Heart left ventricle (tissue), 16 donors: ENCODE measurements at regions of chr2 and their contacts with region 1.

Region 1: GRCh38 chr2:124804014-124804940 is 779.2 kb downstream of the CNTNAP5 start:
- DNase-seq: no peak
- ATAC-seq: no peak
- H3K4me3 ChIP-seq: no peak overlapping the region
- H3K27ac ChIP-seq: no peak overlapping the region
- H3K4me1 ChIP-seq: no peaks in the 10 kb centered on the region
- H3K27me3 ChIP-seq: no peaks in the 10 kb centered on the region
- CTCF ChIP-seq: peak; percentile 34 to 59 (median 51)
- POLR2A ChIP-seq: no peak

Region 2: GRCh38 chr2:124027182-124027581 is 777.1 kb before region 1 on chr2:
- intact Hi-C with region 1: loop called in 2 of 10 experiments (anchors 5 to 10 kb)
- DNase-seq: no peak
- ATAC-seq: peak in 3 of 4 donors; percentile 55 to 70 (median 63)
- H3K4me3 ChIP-seq: no peak overlapping the region
- H3K27ac ChIP-seq: no peak overlapping the region
- H3K4me1 ChIP-seq: peaks cover 0 to 9% (median 0%) of the 10 kb centered on the region in 12 donors
- H3K27me3 ChIP-seq: peaks cover 4 to 46% (median 29%) of the 10 kb centered on the region in 9 donors
- CTCF ChIP-seq: peak; percentile 39 to 68 (median 62)
- POLR2A ChIP-seq: no peak

Region 3: GRCh38 chr2:124039846-124040245 is 764.4 kb before region 1 on chr2:
- intact Hi-C with region 1: loop called in 1 of 10 experiments (anchors 10 kb)
- DNase-seq: no peak
- ATAC-seq: no peak
- H3K4me3 ChIP-seq: no peak overlapping the region
- H3K27ac ChIP-seq: no peak overlapping the region
- H3K4me1 ChIP-seq: no peaks in the 10 kb centered on the region
- H3K27me3 ChIP-seq: no peaks in the 10 kb centered on the region
- CTCF ChIP-seq: no peak
- POLR2A ChIP-seq: no peak

Region 4: GRCh38 chr2:125037135-125037653 is 232.9 kb after region 1 on chr2:
- intact Hi-C with region 1: no loop called
- DNase-seq: no peak
- ATAC-seq: no peak
- H3K4me3 ChIP-seq: no peak overlapping the region
- H3K27ac ChIP-seq: no peak overlapping the region
- H3K4me1 ChIP-seq: no peaks in the 10 kb centered on the region
- H3K27me3 ChIP-seq: no peaks in the 10 kb centered on the region
- CTCF ChIP-seq: no peak
- POLR2A ChIP-seq: no peak